ENCODE measurements at regions of chr7 and their contacts with region 1.

Region 1: DNA sequence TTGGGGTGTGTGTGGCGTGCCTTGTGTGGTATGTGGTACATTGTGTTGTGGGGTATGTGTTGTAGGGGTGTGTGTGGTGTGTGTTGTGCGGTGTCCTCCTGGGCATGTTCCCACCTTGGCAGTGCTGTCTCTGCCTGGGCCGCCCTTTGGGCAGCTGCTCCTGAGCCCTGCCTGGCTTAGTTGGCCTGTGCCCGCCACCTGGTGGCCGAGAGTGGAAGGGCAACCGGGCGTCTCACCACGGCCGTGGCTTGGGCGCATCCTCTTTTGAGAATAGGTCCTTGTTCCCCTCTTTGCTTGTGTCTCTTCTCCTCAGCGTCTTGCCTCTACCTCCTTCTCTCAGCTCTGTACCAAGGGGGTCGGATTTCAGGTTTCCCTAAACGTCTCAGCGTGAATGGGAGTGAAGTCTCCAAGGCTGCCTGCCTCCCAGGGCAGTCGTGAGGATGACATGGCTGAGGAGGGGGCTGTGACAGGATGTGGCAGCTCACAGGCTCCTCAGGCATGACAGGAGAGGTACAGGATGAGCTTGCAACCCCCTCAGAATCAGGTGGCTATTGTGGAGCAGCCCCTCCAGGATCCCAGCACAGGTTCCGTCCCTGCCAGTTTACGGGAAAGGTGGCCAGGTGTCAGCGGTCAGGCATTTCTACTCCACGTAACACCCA is 98.4 kb upstream of the PODXL start:
- DNase-seq: peak; percentile 88
- H3K4me3 Mint-ChIP-seq: no peak overlapping the region
- H3K27ac Mint-ChIP-seq: no peak overlapping the region
- H3K4me1 Mint-ChIP-seq: no peaks in the 10 kb centered on the region
- H3K27me3 Mint-ChIP-seq: peaks cover 4% of the 10 kb centered on the region

Region 2: GRCh38 chr7:131507592-131508331 is 147.0 kb before region 1 on chr7:
- CTCF ChIA-PET with region 1: interaction called, 34 read pairs
- POLR2A ChIA-PET with region 1: no interaction called
- intact Hi-C with region 1: loop called (anchors 1 kb)
- DNase-seq: peak; percentile 88
- H3K4me3 Mint-ChIP-seq: peak overlapping the region; percentile 20
- H3K27ac Mint-ChIP-seq: no peak overlapping the region
- H3K4me1 Mint-ChIP-seq: peaks cover 18% of the 10 kb centered on the region
- H3K27me3 Mint-ChIP-seq: peaks cover 9% of the 10 kb centered on the region